ENCODE measurements at regions of chr2 and their contacts with region 1.

Region 1: DNA sequence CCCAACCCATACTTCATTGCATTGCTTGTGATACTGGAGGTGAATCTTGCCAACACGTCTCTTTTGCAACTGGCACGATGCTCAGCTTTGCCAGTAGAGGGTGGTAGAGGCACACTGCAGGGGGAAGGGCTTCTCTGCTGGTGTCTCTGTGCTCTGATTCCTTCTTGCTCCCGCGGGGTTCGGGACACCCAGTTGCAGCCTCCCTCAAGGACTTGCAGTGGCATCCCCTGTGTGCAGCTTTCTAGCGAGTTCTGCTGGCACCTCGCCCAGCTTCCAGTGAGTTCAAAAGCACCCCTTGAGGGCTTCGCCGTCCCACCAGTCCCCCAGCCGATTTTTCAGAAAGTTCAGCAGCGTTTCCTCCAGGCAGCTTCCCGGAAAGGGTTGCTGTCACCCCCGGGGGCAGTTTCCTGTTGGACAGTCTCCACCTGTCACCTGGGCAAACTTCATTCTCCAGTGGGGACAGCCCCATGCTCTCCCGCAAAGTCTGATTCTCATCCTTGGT is 35.3 kb upstream of the EN1 start:
- DNase-seq: peak; percentile 69 to 81 (median 73)
- H3K4me3 ChIP-seq: peak overlapping the region in 1 of 7 experiments; percentile 67
- H3K27ac ChIP-seq: no peak overlapping the region
- H3K4me1 ChIP-seq: peaks cover 0 to 6% (median 0%) of the 10 kb centered on the region in 4 experiments
- H3K27me3 ChIP-seq: peaks cover 0 to 41% (median 6%) of the 10 kb centered on the region in 5 experiments

Region 2: DNA sequence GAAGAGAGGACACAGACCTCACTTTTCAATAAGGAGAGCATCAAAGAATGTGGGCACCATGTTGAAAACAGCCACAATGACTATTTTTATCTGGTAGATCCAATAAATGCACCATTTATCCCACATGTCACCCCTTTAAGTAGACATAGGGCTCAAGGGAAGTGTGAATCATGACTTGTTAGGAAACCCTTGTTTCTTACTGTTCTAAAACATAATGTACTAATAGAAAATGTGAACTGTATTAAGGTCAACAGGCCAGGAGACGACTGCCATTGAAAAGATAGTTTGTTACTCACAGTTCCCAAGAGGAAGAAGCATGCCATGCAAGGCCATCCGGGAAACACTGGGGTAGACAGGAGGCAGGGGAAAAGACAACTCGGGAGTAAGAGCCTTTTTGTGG is 173.0 kb before region 1 on chr2:
- CTCF ChIA-PET with region 1: no interaction called
- POLR2A ChIA-PET with region 1: no interaction called
- DNase-seq: no peak
- H3K4me3 ChIP-seq: no peak overlapping the region
- H3K27ac ChIP-seq: no peak overlapping the region
- H3K4me1 ChIP-seq: no peaks in the 10 kb centered on the region
- H3K27me3 ChIP-seq: no peaks in the 10 kb centered on the region

Region 3: DNA sequence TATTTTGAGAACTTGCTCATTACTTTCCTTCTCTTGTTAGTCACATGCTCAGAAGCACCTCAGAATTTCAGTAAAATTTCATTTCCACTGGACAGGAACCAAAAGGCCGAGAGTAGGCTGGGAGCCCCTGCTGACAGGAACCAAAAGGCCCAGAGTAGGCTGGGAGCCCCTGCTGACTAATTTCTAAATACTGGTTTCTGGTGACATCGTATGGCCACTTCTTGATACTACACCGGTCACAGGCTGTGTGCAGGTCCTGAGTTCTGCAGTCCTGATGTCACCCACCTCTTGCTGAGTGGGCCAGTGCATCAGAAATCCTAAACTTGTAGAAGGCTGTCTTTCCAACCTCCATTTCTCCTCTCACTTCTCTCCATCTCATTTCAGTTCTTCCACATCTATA is 17.7 kb before region 1 on chr2:
- CTCF ChIA-PET with region 1: interaction called, 51 read pairs
- POLR2A ChIA-PET with region 1: no interaction called
- DNase-seq: peak; percentile 67 to 78 (median 71)
- H3K4me3 ChIP-seq: no peak overlapping the region
- H3K27ac ChIP-seq: no peak overlapping the region
- H3K4me1 ChIP-seq: no peaks in the 10 kb centered on the region
- H3K27me3 ChIP-seq: peaks cover 7 to 54% (median 37%) of the 10 kb centered on the region in 5 experiments

Region 4: GRCh38 chr2:118940486-118941205 is 57.9 kb after region 1 on chr2:
- CTCF ChIA-PET with region 1: interaction called, 13 read pairs
- POLR2A ChIA-PET with region 1: no interaction called
- DNase-seq: peak; percentile 43 to 65 (median 63)
- H3K4me3 ChIP-seq: peak overlapping the region in 3 of 7 experiments; percentile 13 to 15 (median 14)
- H3K27ac ChIP-seq: no peak overlapping the region
- H3K4me1 ChIP-seq: peaks cover 11 to 20% (median 14%) of the 10 kb centered on the region in 4 experiments
- H3K27me3 ChIP-seq: no peaks in the 10 kb centered on the region

Region 5: GRCh38 chr2:119126650-119127049 is 243.9 kb after region 1 on chr2:
- CTCF ChIA-PET with region 1: interaction called, 42 read pairs
- POLR2A ChIA-PET with region 1: no interaction called
- DNase-seq: peak; percentile 32 to 44 (median 33)
- H3K4me3 ChIP-seq: no peak overlapping the region
- H3K27ac ChIP-seq: no peak overlapping the region
- H3K4me1 ChIP-seq: no peaks in the 10 kb centered on the region
- H3K27me3 ChIP-seq: peaks cover 4 to 75% (median 15%) of the 10 kb centered on the region in 5 experiments

Region 6: GRCh38 chr2:119174216-119175037 is 291.7 kb after region 1 on chr2:
- CTCF ChIA-PET with region 1: interaction called, 43 read pairs
- POLR2A ChIA-PET with region 1: no interaction called
- DNase-seq: peak; percentile 45 to 72 (median 60)
- H3K4me3 ChIP-seq: no peak overlapping the region
- H3K27ac ChIP-seq: no peak overlapping the region
- H3K4me1 ChIP-seq: no peaks in the 10 kb centered on the region
- H3K27me3 ChIP-seq: peaks cover 0 to 6% (median 0%) of the 10 kb centered on the region in 5 experiments